MCF 10A (cell line): ENCODE measurements at regions of chr1 and their contacts with region 1.

Region 1: GRCh38 chr1:163410073-163410999 is 88.6 kb downstream of the NUF2 start:
- DNase-seq: peak; percentile 75
- H3K4me3 Mint-ChIP-seq: peak overlapping the region; percentile 26
- H3K27ac Mint-ChIP-seq: no peak overlapping the region
- H3K4me1 Mint-ChIP-seq: peaks cover 8% of the 10 kb centered on the region
- H3K27me3 Mint-ChIP-seq: peaks cover 8% of the 10 kb centered on the region
- CTCF ChIP-seq: peak; percentile 91

Region 2: GRCh38 chr1:163046071-163046470 is 364.3 kb before region 1 on chr1:
- CTCF ChIA-PET with region 1: no interaction called
- POLR2A ChIA-PET with region 1: no interaction called
- intact Hi-C with region 1: no loop called
- DNase-seq: no peak
- H3K4me3 Mint-ChIP-seq: no peak overlapping the region
- H3K27ac Mint-ChIP-seq: no peak overlapping the region
- H3K4me1 Mint-ChIP-seq: no peaks in the 10 kb centered on the region
- H3K27me3 Mint-ChIP-seq: no peaks in the 10 kb centered on the region
- CTCF ChIP-seq: no peak

Region 3: DNA sequence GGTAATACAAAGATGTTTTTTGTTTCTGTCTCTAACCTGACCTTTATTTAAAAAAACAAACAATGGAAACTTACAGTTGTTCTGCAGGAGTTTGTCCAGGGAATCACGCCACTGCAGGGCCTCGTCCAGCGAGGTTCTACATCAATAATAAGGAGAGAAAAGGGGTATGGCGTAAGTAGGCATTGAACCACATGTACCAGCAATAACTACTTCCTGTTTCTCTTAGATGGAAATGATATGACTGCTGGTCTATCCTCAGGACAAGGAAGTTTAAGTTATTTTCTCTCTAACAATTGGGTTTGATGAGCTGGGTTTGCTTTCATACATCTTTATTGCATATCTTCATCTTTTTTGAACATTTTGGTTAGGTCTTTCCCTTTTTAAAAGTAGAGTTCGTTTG is 248.5 kb before region 1 on chr1:
- CTCF ChIA-PET with region 1: no interaction called
- POLR2A ChIA-PET with region 1: no interaction called
- intact Hi-C with region 1: no loop called
- DNase-seq: no peak
- H3K4me3 Mint-ChIP-seq: no peak overlapping the region
- H3K27ac Mint-ChIP-seq: no peak overlapping the region
- H3K4me1 Mint-ChIP-seq: peaks cover 6% of the 10 kb centered on the region
- H3K27me3 Mint-ChIP-seq: no peaks in the 10 kb centered on the region
- CTCF ChIP-seq: no peak

Region 4: DNA sequence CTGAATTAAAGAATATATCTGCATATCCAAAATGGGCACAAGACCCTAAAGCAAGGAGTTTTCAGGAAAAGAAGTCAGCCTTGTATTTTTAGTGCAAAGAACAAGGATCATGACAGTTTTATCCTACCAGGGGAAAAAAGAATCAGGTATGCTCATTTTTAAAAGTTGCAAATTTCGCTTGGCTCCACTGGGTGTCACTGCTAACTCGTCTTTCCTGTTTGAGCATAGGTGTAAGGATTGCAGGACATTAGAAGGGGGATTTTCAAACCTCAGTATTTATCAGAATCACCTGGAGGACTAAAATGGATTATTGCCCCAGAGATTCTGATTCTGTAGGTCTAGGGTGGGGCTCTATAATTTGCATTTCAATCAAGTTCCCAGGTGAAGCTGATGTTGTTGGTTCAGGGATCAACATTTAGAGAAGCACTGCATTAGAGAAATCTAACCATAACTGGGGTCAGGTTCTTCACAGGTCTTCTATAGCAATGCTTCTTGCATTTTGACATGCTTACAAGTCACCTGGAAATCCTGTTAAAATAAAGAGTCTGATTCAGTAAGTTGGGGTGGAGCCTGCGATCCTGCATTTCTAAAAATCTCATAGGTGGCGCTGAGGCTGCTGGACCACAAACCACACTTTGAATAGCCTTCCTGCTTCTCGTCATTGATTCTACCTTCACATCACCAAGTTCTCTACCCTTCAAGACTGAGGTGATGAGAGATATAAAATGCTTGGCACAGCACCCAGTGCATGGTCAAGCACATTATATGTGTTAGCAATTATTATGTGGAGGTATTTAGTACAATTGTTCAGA is 49.0 kb before region 1 on chr1:
- CTCF ChIA-PET with region 1: interaction called, 5 read pairs
- POLR2A ChIA-PET with region 1: no interaction called
- intact Hi-C with region 1: loop called (anchors 1 kb)
- DNase-seq: peak; percentile 58
- H3K4me3 Mint-ChIP-seq: no peak overlapping the region
- H3K27ac Mint-ChIP-seq: no peak overlapping the region
- H3K4me1 Mint-ChIP-seq: no peaks in the 10 kb centered on the region
- H3K27me3 Mint-ChIP-seq: no peaks in the 10 kb centered on the region
- CTCF ChIP-seq: peak; percentile 65

Region 5: DNA sequence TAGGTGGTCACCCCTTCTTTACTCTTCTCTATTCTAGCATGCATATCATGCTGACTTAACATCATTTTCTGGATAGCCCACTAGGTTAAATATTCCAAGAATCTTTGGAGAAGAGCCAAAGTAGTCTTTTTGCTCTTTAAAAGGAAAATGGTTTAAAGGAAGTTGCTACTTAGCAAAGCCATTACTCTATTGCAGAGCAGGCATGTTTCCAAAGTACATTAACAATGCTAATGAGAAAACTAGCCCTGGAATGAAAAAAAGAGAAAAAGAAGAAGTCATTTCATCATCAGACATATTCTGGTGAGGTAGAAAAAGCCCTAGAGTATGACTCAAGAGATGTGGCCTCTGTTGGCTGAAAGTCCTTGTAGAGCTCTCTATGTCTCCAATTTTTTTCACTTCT is 14.5 kb before region 1 on chr1:
- CTCF ChIA-PET with region 1: interaction called, 25 read pairs
- POLR2A ChIA-PET with region 1: no interaction called
- intact Hi-C with region 1: no loop called
- DNase-seq: no peak
- H3K4me3 Mint-ChIP-seq: no peak overlapping the region
- H3K27ac Mint-ChIP-seq: no peak overlapping the region
- H3K4me1 Mint-ChIP-seq: no peaks in the 10 kb centered on the region
- H3K27me3 Mint-ChIP-seq: peaks cover 24% of the 10 kb centered on the region
- CTCF ChIP-seq: no peak

Region 6: DNA sequence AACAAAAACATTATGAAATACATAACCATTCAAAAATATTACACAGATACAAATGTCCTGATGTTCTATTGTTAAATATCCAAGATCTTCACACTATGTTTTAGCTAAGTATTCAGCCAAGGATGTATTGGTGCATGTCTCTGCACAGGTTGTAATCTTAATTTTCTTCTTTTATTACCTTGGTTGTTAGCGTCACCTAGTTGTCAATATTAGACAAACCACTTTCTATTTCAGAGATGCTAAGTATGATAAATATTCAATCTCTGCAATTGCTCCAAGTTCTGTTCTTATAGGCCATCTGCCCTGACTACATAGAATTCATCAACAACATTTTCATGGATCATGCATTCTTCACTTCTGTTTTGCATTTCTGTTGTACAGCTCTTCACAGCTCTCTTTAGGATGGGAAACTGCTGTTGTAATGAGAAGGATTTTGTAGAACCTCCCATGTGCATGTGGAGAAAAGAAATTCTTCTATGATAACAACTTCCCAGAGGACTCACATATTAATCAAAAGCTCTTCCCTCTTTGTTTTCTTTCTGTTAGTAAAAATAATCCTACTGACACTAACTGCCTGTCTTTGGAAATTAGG is 291.5 kb after region 1 on chr1:
- CTCF ChIA-PET with region 1: no interaction called
- POLR2A ChIA-PET with region 1: no interaction called
- intact Hi-C with region 1: loop called (anchors 10 kb)
- DNase-seq: no peak
- H3K4me3 Mint-ChIP-seq: no peak overlapping the region
- H3K27ac Mint-ChIP-seq: no peak overlapping the region
- H3K4me1 Mint-ChIP-seq: no peaks in the 10 kb centered on the region
- H3K27me3 Mint-ChIP-seq: no peaks in the 10 kb centered on the region
- CTCF ChIP-seq: peak; percentile 11